ENCODE measurements at regions of chr1 and their contacts with region 1.

Region 1: GRCh38 chr1:150561974-150562445 is 12.8 kb downstream of the ADAMTSL4 start:
- DNase-seq: peak; percentile 98
- H3K4me3 Mint-ChIP-seq: peak overlapping the region; percentile 95
- H3K27ac Mint-ChIP-seq: peak overlapping the region; percentile 100
- H3K4me1 Mint-ChIP-seq: peaks cover 55% of the 10 kb centered on the region
- H3K27me3 Mint-ChIP-seq: no peaks in the 10 kb centered on the region

Region 2: DNA sequence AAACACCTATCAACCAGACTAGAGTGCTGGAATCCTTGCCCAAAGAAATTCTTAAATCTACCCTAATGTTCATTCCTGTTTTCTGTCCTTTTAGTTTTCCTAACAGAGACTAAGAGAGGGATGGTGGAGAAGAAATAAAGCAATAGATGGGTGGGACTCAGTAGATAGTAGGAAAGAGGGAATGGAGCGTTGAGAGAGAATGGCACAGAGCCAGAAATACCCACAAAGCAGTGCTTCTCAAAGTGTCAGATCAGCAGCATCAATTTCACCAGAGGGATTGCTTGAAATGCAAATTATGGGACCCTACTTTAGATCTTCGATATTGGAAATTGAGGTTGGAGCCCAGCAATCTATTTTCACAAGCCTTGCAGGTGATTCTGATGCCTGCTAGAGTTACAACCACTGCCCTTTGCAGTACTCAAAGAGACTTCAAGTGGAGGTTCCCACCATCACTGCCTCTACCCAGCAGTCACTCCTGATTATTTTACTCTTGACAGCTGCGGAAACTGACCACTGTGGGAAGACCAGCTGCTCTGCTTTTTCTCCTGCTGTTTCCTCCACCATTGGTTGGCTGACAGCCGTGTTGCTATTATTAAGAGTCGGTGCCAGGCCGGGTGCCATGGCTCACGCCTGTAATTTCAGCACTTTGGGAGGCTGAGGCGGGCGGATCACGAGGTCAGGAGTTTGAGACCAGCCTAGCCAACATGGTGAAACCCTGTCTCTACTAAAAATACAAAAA is 252.1 kb before region 1 on chr1:
- intact Hi-C with region 1: no loop called
- DNase-seq: no peak
- H3K4me3 Mint-ChIP-seq: no peak overlapping the region
- H3K27ac Mint-ChIP-seq: no peak overlapping the region
- H3K4me1 Mint-ChIP-seq: no peaks in the 10 kb centered on the region
- H3K27me3 Mint-ChIP-seq: no peaks in the 10 kb centered on the region

Region 3: DNA sequence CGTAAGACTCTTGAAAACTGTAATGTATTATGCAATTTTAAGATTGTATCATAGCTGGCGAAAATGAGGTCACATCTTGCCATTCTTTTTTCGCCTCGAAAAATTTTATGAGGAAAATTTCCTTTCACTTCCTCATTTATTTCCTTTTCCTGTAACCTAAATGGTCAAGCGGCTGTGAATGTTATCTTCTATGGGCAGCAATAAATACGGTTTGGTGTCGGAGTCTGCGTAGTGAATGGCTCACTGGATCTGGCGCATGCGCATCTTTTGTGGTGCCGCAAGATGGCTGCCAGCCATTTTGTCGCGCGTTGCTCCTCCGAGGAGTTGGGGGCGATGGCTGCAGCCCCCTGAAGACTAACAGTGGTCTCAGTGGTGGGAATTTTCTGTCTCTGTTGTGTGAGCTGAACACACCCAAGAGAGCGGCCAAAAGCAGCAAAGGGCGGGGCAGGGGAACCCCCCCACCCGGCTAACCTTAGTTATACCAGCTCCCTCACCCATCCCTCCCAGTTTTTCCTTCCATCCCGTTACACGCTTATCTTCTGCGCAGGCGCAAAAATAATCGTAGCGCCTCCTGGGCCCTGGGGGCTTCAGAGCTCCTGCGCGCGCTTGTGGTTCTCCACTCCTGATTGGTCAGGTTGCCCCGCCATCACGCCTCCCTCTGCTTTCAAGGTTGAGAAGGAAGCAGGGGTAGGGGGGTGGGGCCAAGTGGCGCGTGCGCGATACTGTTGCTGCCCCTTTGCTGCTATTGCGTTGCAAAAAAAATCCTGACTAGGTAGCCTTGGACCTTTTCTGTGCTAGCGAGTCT is 198.4 kb before region 1 on chr1 and contains the start of gene RPRD2:
- intact Hi-C with region 1: loop called (anchors 2 kb)
- DNase-seq: peak; percentile 100
- H3K4me3 Mint-ChIP-seq: peak within 1 kb of the TSS; percentile 89
- H3K27ac Mint-ChIP-seq: peak within 1 kb of the TSS; percentile 93
- H3K4me1 Mint-ChIP-seq: peaks cover 25% of the 10 kb centered on the region
- H3K27me3 Mint-ChIP-seq: peaks cover 2% of the 10 kb centered on the region
- total RNA-seq, gene RPRD2: 23.7 and 24.6 TPM in 2 replicates

Region 4: DNA sequence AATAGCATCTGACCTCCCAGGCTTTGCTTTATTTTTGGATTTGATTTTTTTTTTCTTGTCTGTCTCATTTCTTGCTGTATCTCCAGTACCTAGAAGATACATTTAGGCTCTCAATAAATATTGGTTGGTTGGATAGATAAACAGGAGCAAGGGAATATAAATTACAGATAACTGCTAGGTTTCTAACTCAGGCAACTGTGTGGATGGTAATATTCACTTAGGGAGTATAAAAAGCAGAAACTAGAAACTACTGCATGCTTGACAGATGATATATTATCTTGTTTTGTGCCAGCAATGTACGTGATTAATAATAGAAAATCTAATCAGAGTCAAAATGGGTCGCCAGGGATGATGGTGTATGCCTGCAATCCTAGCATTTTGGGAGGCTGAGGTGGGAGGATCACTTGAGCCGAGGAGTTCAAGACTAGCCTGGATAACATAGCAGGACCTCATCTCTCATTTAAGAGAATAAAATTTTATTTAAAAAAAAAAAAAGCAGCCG is 105.8 kb before region 1 on chr1:
- intact Hi-C with region 1: no loop called
- DNase-seq: no peak
- H3K4me3 Mint-ChIP-seq: no peak overlapping the region
- H3K27ac Mint-ChIP-seq: no peak overlapping the region
- H3K4me1 Mint-ChIP-seq: no peaks in the 10 kb centered on the region
- H3K27me3 Mint-ChIP-seq: no peaks in the 10 kb centered on the region

Region 5: DNA sequence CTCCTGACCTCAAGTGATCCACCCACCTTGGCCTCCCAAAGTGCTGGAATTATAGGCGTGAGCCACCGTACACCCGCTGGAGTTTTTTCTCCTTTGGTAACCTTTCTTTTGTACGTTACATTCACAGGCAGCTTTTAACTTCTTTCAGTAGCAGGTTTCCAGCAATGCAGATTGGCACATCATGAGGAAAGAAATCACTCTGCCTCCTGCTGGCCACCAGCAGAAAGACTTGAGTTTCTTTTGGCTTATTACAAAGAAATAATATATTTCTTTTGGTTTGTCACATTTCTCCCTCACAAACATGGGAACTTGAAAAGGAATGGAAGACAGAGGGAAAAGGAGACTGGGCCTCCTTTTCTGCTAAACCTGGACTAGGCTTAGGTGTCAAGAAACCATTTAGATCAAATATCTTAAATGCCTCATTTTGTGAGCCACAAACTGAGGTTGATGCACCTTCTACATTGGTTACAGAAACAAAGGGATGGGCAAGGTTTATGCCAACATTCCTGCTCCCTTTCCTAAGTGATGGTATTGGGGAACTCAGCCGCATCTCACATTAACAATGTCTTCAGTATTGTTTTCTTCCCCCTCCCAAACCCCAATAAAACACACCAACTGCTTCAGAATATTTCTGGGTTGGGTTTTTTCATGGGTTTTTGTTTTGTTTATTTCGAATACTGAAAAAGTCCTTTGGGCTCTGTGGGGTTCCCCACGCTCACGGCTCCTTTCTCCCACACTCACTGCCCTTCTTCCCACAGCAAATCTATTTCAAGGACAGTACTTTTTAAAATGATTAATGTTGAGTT is 59.7 kb after region 1 on chr1:
- intact Hi-C with region 1: loop called (anchors 1 kb)
- DNase-seq: peak; percentile 88
- H3K4me3 Mint-ChIP-seq: peak overlapping the region; percentile 67
- H3K27ac Mint-ChIP-seq: peak overlapping the region; percentile 82
- H3K4me1 Mint-ChIP-seq: peaks cover 70% of the 10 kb centered on the region
- H3K27me3 Mint-ChIP-seq: no peaks in the 10 kb centered on the region

Region 6: DNA sequence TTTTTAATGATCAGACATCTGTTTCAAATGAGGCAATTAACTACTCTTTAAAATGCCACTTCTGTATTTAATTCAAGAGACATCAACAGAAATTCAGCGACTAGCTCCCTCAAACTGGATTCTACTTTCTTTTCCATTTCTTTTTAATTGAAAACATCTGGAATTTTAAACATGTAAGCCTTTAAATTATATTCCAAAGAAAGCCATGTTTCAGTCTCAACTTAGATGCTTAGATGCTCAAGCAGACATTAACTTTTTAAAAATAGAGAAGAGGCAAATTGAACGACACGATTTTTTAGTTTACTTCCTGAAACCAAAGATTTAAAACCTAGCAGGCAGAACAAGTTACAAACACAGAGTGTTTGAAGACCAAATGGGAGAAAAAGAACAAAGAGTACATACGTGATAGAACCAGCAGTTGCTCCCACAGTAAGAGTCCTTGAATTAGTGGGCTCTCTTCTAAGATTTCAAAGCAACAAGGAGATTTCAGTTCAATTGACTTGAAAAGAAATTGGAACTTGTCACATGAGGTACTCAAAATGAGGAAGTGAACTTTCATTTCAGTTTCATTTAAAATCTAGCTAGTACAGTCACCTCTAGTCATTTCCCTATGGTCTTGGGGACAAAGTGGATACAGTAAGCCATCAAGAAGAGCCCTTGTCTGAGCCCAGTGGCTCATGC is 203.4 kb after region 1 on chr1 and contains the start of gene CTSS:
- intact Hi-C with region 1: loop called (anchors 5 kb)
- DNase-seq: peak; percentile 70
- H3K4me3 Mint-ChIP-seq: peak within 1 kb of the TSS; percentile 83
- H3K27ac Mint-ChIP-seq: peak within 1 kb of the TSS; percentile 91
- H3K4me1 Mint-ChIP-seq: peaks cover 30% of the 10 kb centered on the region
- H3K27me3 Mint-ChIP-seq: no peaks in the 10 kb centered on the region
- total RNA-seq, gene CTSS: 26.9 and 28.3 TPM in 2 replicates

Region 7: GRCh38 chr1:150979092-150980056 is 417.4 kb after region 1 on chr1:
- intact Hi-C with region 1: loop called (anchors 5 kb)
- DNase-seq: peak; percentile 97
- H3K4me3 Mint-ChIP-seq: no peak overlapping the region
- H3K27ac Mint-ChIP-seq: peak overlapping the region; percentile 10
- H3K4me1 Mint-ChIP-seq: peaks cover 25% of the 10 kb centered on the region
- H3K27me3 Mint-ChIP-seq: no peaks in the 10 kb centered on the region

Region 8: GRCh38 chr1:151156515-151156819 is 594.5 kb after region 1 on chr1 and contains the start of gene TNFAIP8L2:
- intact Hi-C with region 1: loop called (anchors 5 kb)
- DNase-seq: peak; percentile 94
- H3K4me3 Mint-ChIP-seq: peak within 1 kb of the TSS; percentile 97
- H3K27ac Mint-ChIP-seq: peak within 1 kb of the TSS; percentile 96
- H3K4me1 Mint-ChIP-seq: peaks cover 42% of the 10 kb centered on the region
- H3K27me3 Mint-ChIP-seq: no peaks in the 10 kb centered on the region
- total RNA-seq, gene TNFAIP8L2: 29.4 and 32.5 TPM in 2 replicates

Measured in activated CD4-positive, alpha-beta T cell treated with anti-CD3 and anti-CD28 coated beads, Interleukin-2, amount 10 ng/mL, durations not matched to agents 24 days and 14 days (primary cell).